ENCODE measurements at regions of chr11 and their contacts with region 1.

Region 1: GRCh38 chr11:6353367-6353987 is 33.2 kb upstream of the CAVIN3 start:
- H3K4me3 ChIP-seq: no peak overlapping the region
- H3K27ac ChIP-seq: no peak overlapping the region
- H3K4me1 ChIP-seq: no peaks in the 10 kb centered on the region
- CTCF ChIP-seq: peak; percentile 86

Region 2: DNA sequence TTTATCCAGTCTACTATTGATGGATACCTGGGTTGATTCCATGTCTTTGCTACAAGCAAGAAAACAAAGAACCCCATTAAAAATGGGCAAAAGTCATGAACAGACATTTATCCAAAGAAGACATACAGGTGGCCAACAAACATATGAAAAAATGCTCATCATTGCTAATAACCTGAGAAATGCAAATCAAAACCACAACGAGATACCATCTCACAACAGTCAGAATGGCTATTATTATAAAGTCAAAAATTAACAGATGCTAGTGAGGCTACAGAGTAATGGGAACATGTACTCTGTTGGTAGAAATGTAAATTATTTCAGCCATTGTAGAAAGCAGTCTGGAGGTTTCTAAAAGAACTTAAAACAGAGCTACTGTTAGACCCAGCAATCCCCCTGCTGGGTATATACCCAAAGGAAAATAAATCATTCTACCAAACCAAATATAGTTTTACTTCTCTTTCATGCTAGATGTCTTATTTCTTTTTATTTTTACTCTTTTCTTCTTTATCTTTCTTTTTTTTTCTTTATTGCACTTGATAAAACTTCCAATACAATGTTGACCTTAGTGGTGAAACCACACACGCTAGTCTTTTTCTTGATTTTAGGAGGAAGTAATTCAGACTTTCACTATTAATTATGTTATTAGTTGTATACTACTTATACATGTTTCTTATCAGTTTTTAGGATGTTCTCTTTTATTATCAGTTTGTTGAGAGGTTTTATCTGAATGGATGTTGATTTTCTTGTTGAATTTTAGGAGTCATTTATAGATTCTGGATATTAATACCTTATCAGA is 649.5 kb before region 1 on chr11:
- CTCF ChIA-PET with region 1: no interaction called
- POLR2A ChIA-PET with region 1: no interaction called
- H3K4me3 ChIP-seq: no peak overlapping the region
- H3K27ac ChIP-seq: no peak overlapping the region
- H3K4me1 ChIP-seq: no peaks in the 10 kb centered on the region
- CTCF ChIP-seq: no peak

Region 3: GRCh38 chr11:5992604-5993251 is 360.7 kb before region 1 on chr11:
- CTCF ChIA-PET with region 1: interaction called, 18 read pairs
- POLR2A ChIA-PET with region 1: no interaction called
- H3K4me3 ChIP-seq: no peak overlapping the region
- H3K27ac ChIP-seq: no peak overlapping the region
- H3K4me1 ChIP-seq: no peaks in the 10 kb centered on the region
- CTCF ChIP-seq: no peak

Region 4: DNA sequence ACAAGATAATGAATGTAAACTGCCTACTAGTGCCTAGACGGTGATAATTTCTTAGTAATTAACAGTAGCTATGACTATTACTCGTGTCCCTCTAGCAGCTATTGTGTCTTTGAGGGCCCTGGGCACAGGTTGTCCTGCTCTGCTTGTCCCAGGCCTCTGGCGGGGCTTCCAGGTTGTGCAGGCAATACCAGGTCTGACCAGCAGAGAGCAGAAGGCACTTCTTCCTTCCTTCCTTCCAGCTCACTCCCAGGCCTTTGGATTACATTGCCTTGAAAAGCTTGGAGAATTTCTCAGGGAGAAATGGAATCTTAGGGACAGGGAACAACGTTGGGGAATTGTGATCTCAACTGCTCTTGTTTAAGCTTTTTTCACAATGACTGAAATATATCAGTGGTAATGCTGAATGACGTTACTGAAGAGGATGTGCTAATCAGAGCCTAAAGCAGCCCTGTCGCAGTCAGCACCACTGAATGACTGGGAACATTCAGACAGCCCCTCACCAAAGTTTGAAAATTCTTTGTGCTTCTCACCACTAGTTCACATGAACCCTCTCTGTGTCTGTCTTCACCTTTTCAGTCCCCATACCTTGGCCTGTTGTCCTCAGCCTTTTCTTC is 102.2 kb before region 1 on chr11:
- CTCF ChIA-PET with region 1: interaction called, 62 read pairs
- POLR2A ChIA-PET with region 1: no interaction called
- H3K4me3 ChIP-seq: no peak overlapping the region
- H3K27ac ChIP-seq: no peak overlapping the region
- H3K4me1 ChIP-seq: no peaks in the 10 kb centered on the region
- CTCF ChIP-seq: no peak

Region 5: DNA sequence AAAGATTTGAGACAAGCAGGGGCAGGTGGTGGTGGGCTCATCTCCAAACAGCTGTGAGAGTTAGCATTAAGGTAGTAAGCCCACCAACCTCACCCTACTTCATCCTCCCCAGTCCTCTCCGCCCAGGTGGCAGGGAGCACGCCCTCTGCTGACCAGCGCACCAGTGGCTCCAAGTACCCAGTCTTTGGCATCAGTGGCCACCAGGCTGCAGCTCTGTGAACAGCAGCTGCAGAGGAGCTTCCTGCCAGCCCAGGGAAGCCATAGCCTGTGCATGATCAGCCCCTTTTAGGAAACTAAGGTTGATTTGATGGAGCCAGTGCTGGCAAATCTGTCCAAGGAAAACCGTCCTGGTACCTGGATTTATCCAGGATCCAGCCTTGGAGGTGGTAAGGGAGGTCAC is 54.9 kb before region 1 on chr11:
- CTCF ChIA-PET with region 1: interaction called, 15 read pairs
- POLR2A ChIA-PET with region 1: no interaction called
- H3K4me3 ChIP-seq: no peak overlapping the region
- H3K27ac ChIP-seq: no peak overlapping the region
- H3K4me1 ChIP-seq: no peaks in the 10 kb centered on the region
- CTCF ChIP-seq: peak; percentile 48

Region 6: DNA sequence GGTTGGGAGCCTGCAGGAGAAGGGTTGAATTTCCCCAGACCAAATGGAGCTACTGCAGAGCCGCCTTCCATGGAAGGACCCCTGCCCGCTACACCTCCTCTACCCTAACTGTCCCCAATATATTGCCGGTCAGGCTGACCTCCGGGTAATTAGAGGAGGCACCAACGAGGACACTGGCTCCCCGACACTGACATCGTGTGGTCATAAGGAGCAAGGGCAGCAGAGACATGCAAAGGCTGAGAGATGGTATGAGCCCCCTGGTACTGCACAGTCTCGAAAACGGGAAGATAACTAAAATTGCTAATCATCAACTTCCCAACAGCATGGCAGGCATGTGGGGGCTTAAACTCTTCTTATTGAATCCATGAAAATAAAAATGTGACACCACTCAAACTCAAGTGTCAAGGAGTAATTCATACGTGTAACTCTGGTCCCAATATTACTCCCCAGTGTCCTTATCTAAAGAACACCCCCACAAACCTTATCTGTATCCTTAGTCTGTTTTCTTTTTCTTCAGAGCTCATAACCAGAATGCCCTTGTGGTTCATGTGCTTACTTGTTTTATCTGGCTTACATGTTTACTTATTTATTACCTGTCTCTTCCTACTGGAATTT is 37.6 kb before region 1 on chr11:
- CTCF ChIA-PET with region 1: interaction called, 21 read pairs
- POLR2A ChIA-PET with region 1: no interaction called
- H3K4me3 ChIP-seq: no peak overlapping the region
- H3K27ac ChIP-seq: no peak overlapping the region
- H3K4me1 ChIP-seq: no peaks in the 10 kb centered on the region
- CTCF ChIP-seq: peak; percentile 39; the same call in 1 of the 2 replicates

Measured in HEK293 (cell line).